ENCODE measurements at regions of chr1 and their contacts with region 1.

Region 1: DNA sequence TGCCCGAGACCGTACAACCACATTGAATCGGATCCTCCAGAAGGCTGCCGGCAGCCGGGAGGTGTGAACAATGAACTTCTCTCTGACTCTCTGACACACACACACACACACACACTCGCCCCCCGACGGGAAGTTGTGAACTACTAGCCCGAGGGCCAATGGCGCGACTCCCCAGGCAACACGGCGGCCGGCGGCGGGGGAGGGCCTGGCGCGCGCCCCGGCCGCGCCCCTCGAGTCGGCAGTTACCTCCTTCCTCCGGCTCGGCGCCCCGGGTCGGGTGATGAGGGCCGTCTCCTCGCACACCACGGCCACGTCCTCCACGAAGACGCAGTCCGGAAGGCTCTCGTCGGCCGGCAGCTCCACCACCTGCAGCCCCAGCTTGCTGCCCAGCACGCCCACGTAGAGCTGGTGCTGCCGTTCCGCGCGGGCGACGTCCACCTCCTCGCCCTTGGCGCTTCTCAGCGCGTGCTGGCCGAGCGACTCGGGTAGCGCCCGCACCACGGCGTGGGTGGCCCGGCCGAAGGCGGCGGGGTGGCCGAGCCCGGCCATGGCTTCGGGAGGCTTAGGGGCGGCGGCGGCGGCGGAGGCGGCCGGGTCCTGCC is 361 bp downstream of the DDAH1 start:
- DNase-seq: peak; percentile 90
- H3K4me3 ChIP-seq: peak overlapping the region; percentile 65 to 97 (median 91)
- H3K27ac ChIP-seq: peak overlapping the region; percentile 90
- H3K4me1 ChIP-seq: peaks cover 39% of the 10 kb centered on the region
- H3K27me3 ChIP-seq: no peaks in the 10 kb centered on the region
- CTCF ChIP-seq: no peak
- POLR2A ChIP-seq: peak; percentile 92

Region 2: DNA sequence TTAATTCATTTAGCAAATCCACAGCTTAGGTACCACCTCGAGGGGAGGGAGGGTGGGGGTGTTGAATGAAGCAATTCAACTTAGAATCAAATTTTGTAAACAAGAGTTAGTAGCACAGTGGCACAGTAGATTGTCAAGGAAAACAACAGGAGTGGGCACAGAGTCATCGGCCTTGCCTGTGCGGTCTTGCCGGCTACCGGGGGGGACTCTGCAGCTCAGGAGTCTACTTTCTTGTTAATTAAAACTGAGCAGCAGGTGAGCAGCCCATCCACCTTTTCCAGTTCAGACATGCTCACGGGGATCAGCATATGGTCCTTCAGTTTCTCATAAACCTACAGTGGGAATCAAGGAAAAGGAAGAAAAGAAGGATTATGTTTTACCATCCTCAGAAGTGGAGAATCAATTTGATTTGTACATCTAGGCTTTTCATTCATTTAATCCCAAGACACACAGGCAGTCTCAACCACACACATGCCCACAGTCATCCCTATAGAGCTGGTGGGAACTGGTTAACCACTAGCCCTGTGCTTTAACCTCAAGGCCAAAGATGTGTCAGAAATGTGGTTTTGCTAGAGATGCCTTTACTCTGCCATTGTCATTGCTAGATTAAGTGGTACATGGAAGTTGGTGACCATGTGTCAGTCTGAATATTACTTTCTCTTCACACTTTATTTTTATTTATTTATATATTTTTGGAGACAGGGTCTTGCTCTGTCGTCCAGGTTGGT is 143.2 kb before region 1 on chr1:
- CTCF ChIA-PET with region 1: interaction called, 4 read pairs
- POLR2A ChIA-PET with region 1: interaction called, 15 read pairs
- dilution Hi-C with region 1: no loop called
- intact Hi-C with region 1: no loop called
- DNase-seq: peak; percentile 35
- H3K4me3 ChIP-seq: no peak overlapping the region
- H3K27ac ChIP-seq: peak overlapping the region; percentile 100
- H3K4me1 ChIP-seq: peaks cover 79% of the 10 kb centered on the region
- H3K27me3 ChIP-seq: no peaks in the 10 kb centered on the region
- CTCF ChIP-seq: no peak
- POLR2A ChIP-seq: peak; percentile 36

Region 3: GRCh38 chr1:85417017-85417416 is 47.6 kb before region 1 on chr1:
- CTCF ChIA-PET with region 1: interaction called, 8 read pairs
- POLR2A ChIA-PET with region 1: no interaction called
- dilution Hi-C with region 1: no loop called
- intact Hi-C with region 1: loop called (anchors 2 kb)
- DNase-seq: peak; percentile 74
- H3K4me3 ChIP-seq: no peak overlapping the region
- H3K27ac ChIP-seq: peak overlapping the region; percentile 61
- H3K4me1 ChIP-seq: peaks cover 30% of the 10 kb centered on the region
- H3K27me3 ChIP-seq: no peaks in the 10 kb centered on the region
- CTCF ChIP-seq: peak in 1 of 2 donors; percentile 47
- POLR2A ChIP-seq: no peak

Region 4: GRCh38 chr1:85453640-85454194 is 10.9 kb before region 1 on chr1:
- CTCF ChIA-PET with region 1: interaction called, 14 read pairs
- POLR2A ChIA-PET with region 1: interaction called, 14 read pairs
- dilution Hi-C with region 1: no loop called
- intact Hi-C with region 1: loop called (anchors 1 kb)
- DNase-seq: no peak
- H3K4me3 ChIP-seq: no peak overlapping the region
- H3K27ac ChIP-seq: no peak overlapping the region
- H3K4me1 ChIP-seq: peaks cover 27% of the 10 kb centered on the region
- H3K27me3 ChIP-seq: no peaks in the 10 kb centered on the region
- CTCF ChIP-seq: no peak
- POLR2A ChIP-seq: no peak

Region 5: DNA sequence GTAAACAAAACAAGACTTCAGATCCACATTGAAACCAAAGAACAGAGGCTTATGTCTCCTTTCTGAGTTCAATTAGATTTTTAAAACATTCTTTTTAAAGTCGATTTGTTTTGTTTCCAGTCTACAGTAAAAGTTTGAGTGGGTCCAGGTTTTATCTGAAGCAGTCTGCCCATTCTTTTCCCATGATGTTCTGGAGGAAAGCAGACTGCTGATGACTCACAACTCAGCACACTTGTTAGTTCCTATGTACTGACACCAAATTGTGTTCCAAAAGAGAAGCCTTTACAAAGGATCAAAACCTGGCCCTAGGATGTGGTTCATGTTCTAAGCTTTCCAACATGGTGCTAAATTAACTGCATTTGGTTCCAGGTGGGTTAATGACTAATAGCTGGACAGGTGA is 104.5 kb after region 1 on chr1:
- CTCF ChIA-PET with region 1: no interaction called
- POLR2A ChIA-PET with region 1: interaction called, 11 read pairs
- dilution Hi-C with region 1: no loop called
- intact Hi-C with region 1: no loop called
- DNase-seq: peak; percentile 83
- H3K4me3 ChIP-seq: no peak overlapping the region
- H3K27ac ChIP-seq: peak overlapping the region; percentile 71
- H3K4me1 ChIP-seq: peaks cover 69% of the 10 kb centered on the region
- H3K27me3 ChIP-seq: no peaks in the 10 kb centered on the region
- CTCF ChIP-seq: no peak
- POLR2A ChIP-seq: no peak

Region 6: GRCh38 chr1:85746777-85747176 is 282.2 kb after region 1 on chr1:
- CTCF ChIA-PET with region 1: no interaction called
- POLR2A ChIA-PET with region 1: no interaction called
- dilution Hi-C with region 1: no loop called
- intact Hi-C with region 1: no loop called
- DNase-seq: no peak
- H3K4me3 ChIP-seq: no peak overlapping the region
- H3K27ac ChIP-seq: no peak overlapping the region
- H3K4me1 ChIP-seq: no peaks in the 10 kb centered on the region
- H3K27me3 ChIP-seq: peaks cover 3 to 4% of the 10 kb centered on the region in 2 experiments
- CTCF ChIP-seq: no peak
- POLR2A ChIP-seq: no peak